CD8-positive, alpha-beta T cell (primary cell): ENCODE measurements at regions of chr16 and their contacts with region 1.

Region 1: GRCh38 chr16:67883872-67884261 is 818 bp upstream of the NRN1L start:
- DNase-seq: peak; percentile 49 to 86 (median 79)
- ATAC-seq: peak; percentile 91
- H3K4me3 ChIP-seq: no peak overlapping the region
- H3K4me3 Mint-ChIP-seq: no peak overlapping the region
- H3K27ac ChIP-seq: no peak overlapping the region
- H3K27ac Mint-ChIP-seq: no peak overlapping the region
- H3K4me1 ChIP-seq: no peaks in the 10 kb centered on the region
- H3K4me1 Mint-ChIP-seq: no peaks in the 10 kb centered on the region
- H3K27me3 ChIP-seq: no peaks in the 10 kb centered on the region
- H3K27me3 Mint-ChIP-seq: no peaks in the 10 kb centered on the region
- CTCF ChIP-seq: peak; percentile 85

Region 2: DNA sequence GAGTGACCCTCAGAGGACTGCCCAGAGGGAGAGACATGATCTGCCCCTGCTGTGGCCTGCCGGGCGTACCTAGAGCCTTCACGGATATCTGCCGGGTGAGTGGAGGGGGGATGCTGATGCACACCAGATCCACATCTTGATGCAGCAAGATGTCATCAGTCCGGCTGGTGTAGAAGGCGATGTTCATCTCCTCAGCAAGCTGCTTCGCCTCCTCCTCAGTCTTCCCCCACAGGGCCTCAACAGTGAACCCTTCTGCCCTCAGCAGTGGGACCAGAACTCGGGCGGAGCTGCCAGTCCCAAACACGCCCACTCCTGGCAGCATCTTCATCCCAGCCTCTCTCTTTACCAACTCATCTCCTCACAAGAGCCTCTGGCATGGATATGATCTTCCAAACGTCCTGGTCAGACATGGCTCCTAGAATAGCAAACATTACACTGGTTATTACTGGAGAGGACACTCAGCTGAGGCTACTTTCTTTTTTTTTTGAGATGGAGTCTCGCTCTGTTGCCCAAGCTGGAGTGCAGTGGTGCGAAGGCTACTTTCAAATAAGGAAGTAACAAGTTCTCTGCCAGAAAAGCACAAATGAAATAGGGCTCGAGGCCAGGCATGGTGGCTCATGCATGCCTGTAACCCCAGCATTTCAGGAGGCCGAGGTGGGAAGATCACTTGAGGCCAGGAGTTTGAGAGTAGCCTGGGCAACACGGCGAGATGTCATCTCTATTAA is 198.3 kb before region 1 on chr16:
- CTCF ChIA-PET with region 1: no interaction called
- POLR2A ChIA-PET with region 1: no interaction called
- intact Hi-C with region 1: no loop called
- DNase-seq: no peak
- ATAC-seq: no peak
- H3K4me3 ChIP-seq: no peak overlapping the region
- H3K4me3 Mint-ChIP-seq: no peak overlapping the region
- H3K27ac ChIP-seq: no peak overlapping the region
- H3K27ac Mint-ChIP-seq: no peak overlapping the region
- H3K4me1 ChIP-seq: no peaks in the 10 kb centered on the region
- H3K4me1 Mint-ChIP-seq: peaks cover 2% of the 10 kb centered on the region
- H3K27me3 ChIP-seq: no peaks in the 10 kb centered on the region
- H3K27me3 Mint-ChIP-seq: no peaks in the 10 kb centered on the region
- CTCF ChIP-seq: no peak

Region 3: DNA sequence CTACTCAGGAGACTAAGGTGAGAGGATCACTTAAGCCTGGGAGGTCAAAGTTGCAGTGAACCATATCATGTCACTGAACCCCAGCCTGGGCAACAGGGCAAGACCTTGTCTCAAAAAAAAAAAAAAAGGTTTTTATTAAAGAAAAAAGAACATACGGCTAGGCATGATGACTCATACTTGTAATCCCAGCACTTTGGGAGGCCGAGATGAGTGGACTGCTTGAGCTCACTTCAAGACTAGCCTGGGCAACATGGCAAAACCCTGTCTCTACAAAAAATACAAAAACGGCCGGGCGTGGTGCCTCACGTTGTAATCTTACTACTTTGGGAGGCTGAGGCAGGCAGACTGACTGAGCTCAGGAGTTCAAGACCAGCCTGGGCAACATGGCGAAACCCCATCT is 115.9 kb before region 1 on chr16:
- CTCF ChIA-PET with region 1: no interaction called
- POLR2A ChIA-PET with region 1: no interaction called
- intact Hi-C with region 1: no loop called
- DNase-seq: no peak
- ATAC-seq: no peak
- H3K4me3 ChIP-seq: no peak overlapping the region
- H3K4me3 Mint-ChIP-seq: no peak overlapping the region
- H3K27ac ChIP-seq: no peak overlapping the region
- H3K27ac Mint-ChIP-seq: no peak overlapping the region
- H3K4me1 ChIP-seq: no peaks in the 10 kb centered on the region
- H3K4me1 Mint-ChIP-seq: peaks cover 5% of the 10 kb centered on the region
- H3K27me3 ChIP-seq: no peaks in the 10 kb centered on the region
- H3K27me3 Mint-ChIP-seq: no peaks in the 10 kb centered on the region
- CTCF ChIP-seq: no peak

Region 4: DNA sequence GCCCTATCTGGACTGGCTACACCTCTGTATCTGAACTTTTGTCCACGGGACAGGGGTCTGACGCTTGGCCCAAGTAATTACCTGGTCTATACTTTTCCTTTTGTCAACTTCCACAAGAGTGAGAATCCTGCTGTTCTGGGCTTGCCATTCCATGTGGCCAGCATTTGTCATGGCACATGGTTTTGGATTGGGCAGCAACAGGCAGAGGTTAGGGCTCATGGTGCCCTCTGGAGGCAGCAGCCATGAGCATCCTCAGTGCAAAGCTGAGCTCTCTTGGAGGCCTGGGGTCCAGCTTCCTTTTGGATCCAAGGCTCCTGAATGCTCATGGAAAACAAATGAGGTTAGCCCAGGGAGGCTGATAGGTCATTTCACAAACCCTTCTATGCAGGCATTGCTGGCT is 18.6 kb before region 1 on chr16:
- CTCF ChIA-PET with region 1: interaction called, 24 read pairs
- POLR2A ChIA-PET with region 1: no interaction called
- intact Hi-C with region 1: no loop called
- DNase-seq: peak in 2 of 9 experiments; percentile 40 to 51
- ATAC-seq: peak; percentile 61
- H3K4me3 ChIP-seq: no peak overlapping the region
- H3K4me3 Mint-ChIP-seq: no peak overlapping the region
- H3K27ac ChIP-seq: no peak overlapping the region
- H3K27ac Mint-ChIP-seq: no peak overlapping the region
- H3K4me1 ChIP-seq: no peaks in the 10 kb centered on the region
- H3K4me1 Mint-ChIP-seq: peaks cover 7% of the 10 kb centered on the region
- H3K27me3 ChIP-seq: no peaks in the 10 kb centered on the region
- H3K27me3 Mint-ChIP-seq: no peaks in the 10 kb centered on the region
- CTCF ChIP-seq: no peak

Region 5: GRCh38 chr16:67910158-67910557 is 26.3 kb after region 1 on chr16:
- CTCF ChIA-PET with region 1: interaction called, 29 read pairs
- POLR2A ChIA-PET with region 1: no interaction called
- intact Hi-C with region 1: no loop called
- DNase-seq: no peak
- ATAC-seq: peak; percentile 55
- H3K4me3 ChIP-seq: no peak overlapping the region
- H3K4me3 Mint-ChIP-seq: no peak overlapping the region
- H3K27ac ChIP-seq: no peak overlapping the region
- H3K27ac Mint-ChIP-seq: no peak overlapping the region
- H3K4me1 ChIP-seq: no peaks in the 10 kb centered on the region
- H3K4me1 Mint-ChIP-seq: peaks cover 16% of the 10 kb centered on the region
- H3K27me3 ChIP-seq: no peaks in the 10 kb centered on the region
- H3K27me3 Mint-ChIP-seq: no peaks in the 10 kb centered on the region
- CTCF ChIP-seq: no peak

Region 6: DNA sequence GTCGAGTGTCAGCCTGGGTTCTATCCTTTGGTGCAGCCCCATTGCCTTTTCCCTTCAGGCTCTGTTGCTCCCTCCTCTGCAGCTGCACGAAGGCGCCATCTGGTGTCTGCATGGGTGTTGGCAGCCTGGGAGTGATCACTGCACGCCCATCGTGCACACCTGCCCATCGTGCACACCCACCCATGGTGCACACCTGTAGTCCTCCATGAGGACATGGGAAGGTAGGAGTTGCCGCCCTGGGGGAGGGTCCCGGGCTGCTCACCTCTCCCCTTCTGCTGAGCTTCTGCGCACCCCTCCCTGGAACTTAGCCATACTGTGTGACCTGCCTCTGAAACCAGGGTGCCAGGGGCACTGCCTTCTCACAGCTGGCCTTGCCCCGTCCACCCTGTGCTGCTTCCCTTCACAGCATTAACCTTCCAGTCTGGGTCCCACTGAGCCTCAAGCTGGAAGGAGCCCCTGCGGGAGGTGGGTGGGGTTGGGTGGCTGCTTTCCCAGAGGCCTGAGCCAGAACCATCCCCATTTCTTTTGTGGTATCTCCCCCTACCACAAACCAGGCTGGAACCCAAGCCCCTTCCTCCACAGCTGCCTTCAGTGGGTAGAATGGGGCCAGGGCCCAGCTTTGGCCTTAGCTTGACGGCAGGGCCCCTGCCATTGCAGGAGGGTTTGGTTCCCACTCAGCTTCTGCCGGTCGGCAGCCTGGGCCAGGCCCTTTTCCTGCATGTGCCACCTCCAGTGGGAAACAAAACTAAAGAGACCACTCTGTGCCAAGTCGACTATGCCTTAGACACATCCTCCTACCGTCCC is 44.9 kb after region 1 on chr16:
- CTCF ChIA-PET with region 1: interaction called, 49 read pairs
- POLR2A ChIA-PET with region 1: interaction called, 4 read pairs
- intact Hi-C with region 1: loop called in 1 of 2 experiments (anchors 1 kb)
- DNase-seq: peak; percentile 48 to 82 (median 75)
- ATAC-seq: peak; percentile 97
- H3K4me3 ChIP-seq: no peak overlapping the region
- H3K4me3 Mint-ChIP-seq: no peak overlapping the region
- H3K27ac ChIP-seq: peak overlapping the region in 1 of 2 experiments; percentile 31
- H3K27ac Mint-ChIP-seq: no peak overlapping the region
- H3K4me1 ChIP-seq: no peaks in the 10 kb centered on the region
- H3K4me1 Mint-ChIP-seq: peaks cover 3% of the 10 kb centered on the region
- H3K27me3 ChIP-seq: no peaks in the 10 kb centered on the region
- H3K27me3 Mint-ChIP-seq: no peaks in the 10 kb centered on the region
- CTCF ChIP-seq: peak; percentile 76

Region 7: DNA sequence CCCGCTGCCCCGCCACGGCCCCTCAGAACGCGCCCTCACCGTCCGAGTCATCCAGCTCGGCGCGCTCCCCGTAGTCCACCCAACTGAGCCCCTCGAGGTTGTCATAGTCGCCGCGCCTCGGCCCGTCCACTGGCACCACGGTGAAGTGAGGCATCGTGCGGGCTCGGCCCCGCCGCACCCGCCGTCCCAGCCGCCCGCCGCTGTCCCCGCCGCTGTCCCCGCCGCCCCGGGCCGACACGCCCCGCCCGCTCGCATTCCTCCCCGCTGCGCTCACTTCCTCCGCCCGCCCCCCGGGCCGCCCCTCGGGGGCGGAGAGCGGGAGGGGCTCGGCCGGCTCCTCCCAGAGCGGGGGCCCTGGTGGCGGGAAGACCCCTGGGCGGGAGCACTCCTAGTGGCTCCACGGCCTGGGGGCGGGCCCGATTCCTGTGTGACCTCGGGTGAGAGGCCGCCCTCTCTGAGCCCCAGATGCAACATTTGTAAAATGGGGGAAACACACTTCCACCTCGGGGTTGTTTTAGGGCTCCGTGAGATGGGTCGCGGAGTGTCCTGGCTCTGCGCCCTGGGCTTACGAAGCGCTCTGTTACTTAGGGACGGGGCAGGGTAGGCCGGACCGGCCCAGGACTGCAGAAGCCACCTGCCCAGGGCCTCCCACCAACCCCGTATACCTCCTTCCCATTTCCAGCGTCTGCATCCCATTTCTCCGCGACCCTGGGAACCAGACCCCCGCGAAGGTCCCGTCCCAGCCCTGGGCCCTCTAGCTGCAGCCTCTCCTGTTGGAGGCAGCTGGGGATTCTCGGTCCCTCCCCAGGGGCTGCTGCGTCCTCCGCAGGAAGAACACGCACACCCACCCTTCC is 84.8 kb after region 1 on chr16 and contains the start of gene SLC12A4:
- CTCF ChIA-PET with region 1: interaction called, 13 read pairs
- POLR2A ChIA-PET with region 1: no interaction called
- intact Hi-C with region 1: no loop called
- DNase-seq: peak; percentile 66 to 93 (median 86)
- ATAC-seq: peak; percentile 90
- H3K4me3 ChIP-seq: peak within 1 kb of the TSS; percentile 78 to 97
- H3K4me3 Mint-ChIP-seq: peak within 1 kb of the TSS; percentile 83
- H3K27ac ChIP-seq: peak within 1 kb of the TSS; percentile 44 to 59
- H3K27ac Mint-ChIP-seq: peak within 1 kb of the TSS; percentile 94
- H3K4me1 ChIP-seq: peaks cover 15% of the 10 kb centered on the region
- H3K4me1 Mint-ChIP-seq: peaks cover 21% of the 10 kb centered on the region
- H3K27me3 ChIP-seq: no peaks in the 10 kb centered on the region
- H3K27me3 Mint-ChIP-seq: no peaks in the 10 kb centered on the region
- CTCF ChIP-seq: no peak
- total RNA-seq, gene SLC12A4: 20.1 to 20.7 TPM

Region 8: DNA sequence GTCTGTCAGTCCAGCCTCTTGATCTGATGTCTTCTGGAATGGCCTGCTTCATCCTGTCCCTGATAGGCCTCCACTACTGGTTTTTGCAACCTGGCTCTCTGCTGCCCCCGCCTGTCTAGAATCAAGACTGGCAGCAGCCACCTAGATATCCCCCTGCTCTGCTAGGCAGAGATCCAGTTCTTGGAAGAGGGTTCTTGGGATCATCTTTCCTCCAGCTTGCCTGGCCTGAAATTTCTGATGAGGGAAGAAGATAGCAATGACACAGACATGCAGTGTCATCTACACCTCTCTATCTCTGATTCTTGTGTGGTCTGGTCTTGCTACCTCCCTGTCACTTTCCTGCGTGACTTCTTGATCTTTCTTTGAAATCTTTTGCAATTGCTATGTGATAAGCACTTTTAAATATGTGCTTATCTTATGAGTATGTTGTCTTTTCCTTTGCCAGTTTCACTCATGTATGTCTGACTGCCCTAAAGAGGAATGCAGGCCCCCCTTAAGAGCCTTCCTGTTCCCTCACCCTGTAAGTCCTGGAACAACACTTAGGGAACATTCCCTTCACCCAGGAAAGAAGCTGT is 181.0 kb after region 1 on chr16:
- CTCF ChIA-PET with region 1: interaction called, 22 read pairs
- POLR2A ChIA-PET with region 1: no interaction called
- intact Hi-C with region 1: loop called (anchors 1 kb)
- DNase-seq: peak; percentile 39 to 86 (median 73)
- ATAC-seq: peak; percentile 82
- H3K4me3 ChIP-seq: no peak overlapping the region
- H3K4me3 Mint-ChIP-seq: no peak overlapping the region
- H3K27ac ChIP-seq: peak overlapping the region in 1 of 2 experiments; percentile 58
- H3K27ac Mint-ChIP-seq: peak overlapping the region; percentile 92
- H3K4me1 ChIP-seq: peaks cover 72% of the 10 kb centered on the region
- H3K4me1 Mint-ChIP-seq: peaks cover 76% of the 10 kb centered on the region
- H3K27me3 ChIP-seq: no peaks in the 10 kb centered on the region
- H3K27me3 Mint-ChIP-seq: no peaks in the 10 kb centered on the region
- CTCF ChIP-seq: peak; percentile 85